ENCODE measurements at regions of chr11 and their contacts with region 1.

Region 1: DNA sequence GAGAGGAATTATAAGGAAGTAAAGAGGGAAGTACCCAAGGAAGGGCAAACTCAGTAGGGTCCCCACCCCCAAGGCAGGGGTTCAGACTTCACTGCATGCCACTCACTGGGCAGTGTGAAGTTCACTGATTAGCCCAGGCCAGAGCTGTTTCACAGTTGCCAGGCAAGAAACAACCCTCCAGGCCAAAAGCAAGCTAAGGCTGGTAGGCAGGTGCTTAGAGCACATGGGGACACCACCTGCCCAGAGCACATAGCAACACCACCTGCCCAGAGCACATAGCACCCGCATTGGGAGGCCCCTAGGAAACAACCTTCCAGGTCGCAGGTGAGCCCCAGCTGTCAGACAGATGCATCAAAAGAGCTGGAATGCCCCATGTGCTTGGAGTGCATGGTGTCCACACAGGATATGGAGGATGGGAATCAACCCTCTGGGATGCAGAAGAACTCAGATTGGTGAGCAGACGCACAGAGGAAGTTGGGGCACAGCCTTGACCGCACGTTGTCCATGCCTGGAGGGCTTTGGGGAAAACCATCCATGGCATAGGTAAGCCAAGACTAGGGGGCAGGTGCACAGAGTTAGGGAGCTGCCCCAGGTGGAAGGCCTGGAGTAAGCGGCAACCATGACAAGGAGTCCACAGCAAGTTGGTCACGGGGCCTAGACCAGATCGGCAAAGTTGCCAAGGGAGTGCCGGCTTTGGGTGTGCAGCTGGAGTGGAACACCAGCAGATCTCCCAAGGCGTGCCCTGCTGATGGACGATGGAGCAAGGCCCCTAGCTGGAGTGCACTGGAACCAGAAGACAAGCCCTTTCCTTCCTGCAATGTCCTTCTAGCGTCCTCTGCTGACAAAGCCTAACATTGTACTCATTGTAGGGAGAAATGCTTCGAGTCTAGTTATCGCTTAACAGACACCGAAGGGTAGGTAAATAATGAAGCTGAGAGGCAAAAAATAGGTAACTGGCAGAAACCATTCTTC is 7.8 kb upstream of the TMEM216 start:
- DNase-seq: peak; percentile 61
- H3K4me3 Mint-ChIP-seq: no peak overlapping the region
- H3K27ac Mint-ChIP-seq: no peak overlapping the region
- H3K4me1 Mint-ChIP-seq: peaks cover 11% of the 10 kb centered on the region
- H3K27me3 Mint-ChIP-seq: no peaks in the 10 kb centered on the region
- CTCF ChIP-seq: peak; percentile 25

Region 2: DNA sequence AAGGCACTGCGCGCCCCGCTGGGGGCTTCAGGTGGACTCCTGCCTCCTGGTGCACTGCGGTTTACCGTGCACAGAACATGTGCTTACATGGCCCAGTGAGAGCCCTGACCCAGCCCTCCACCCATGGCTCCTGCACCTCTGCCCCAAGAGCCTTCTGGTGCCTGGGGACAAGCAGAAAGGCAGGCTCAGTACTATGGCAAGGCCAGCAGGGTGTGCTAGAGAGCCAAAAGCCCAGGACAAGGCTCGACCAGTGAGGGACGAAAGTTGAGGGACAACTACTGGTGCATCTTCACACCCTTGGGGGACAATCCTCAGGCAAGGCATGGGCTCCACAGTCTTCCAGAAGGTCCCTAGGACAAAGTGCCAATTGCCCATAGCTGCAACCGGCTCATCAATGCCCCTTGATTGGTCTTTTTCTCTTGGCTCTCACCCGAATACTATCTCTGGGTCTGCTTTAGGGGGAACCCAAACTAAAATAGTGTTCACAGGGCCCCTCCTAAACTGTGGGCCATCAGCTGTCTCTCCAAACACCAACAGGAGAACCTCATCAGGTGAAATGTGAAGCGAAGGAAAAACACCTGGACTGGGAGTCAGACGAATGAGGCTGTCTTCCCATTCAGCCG is 130.0 kb before region 1 on chr11:
- CTCF ChIA-PET with region 1: interaction called, 55 read pairs
- POLR2A ChIA-PET with region 1: no interaction called
- intact Hi-C with region 1: loop called (anchors 1 kb)
- DNase-seq: peak; percentile 71
- H3K4me3 Mint-ChIP-seq: no peak overlapping the region
- H3K27ac Mint-ChIP-seq: no peak overlapping the region
- H3K4me1 Mint-ChIP-seq: no peaks in the 10 kb centered on the region
- H3K27me3 Mint-ChIP-seq: peaks cover 34% of the 10 kb centered on the region
- CTCF ChIP-seq: peak; percentile 89

Region 3: DNA sequence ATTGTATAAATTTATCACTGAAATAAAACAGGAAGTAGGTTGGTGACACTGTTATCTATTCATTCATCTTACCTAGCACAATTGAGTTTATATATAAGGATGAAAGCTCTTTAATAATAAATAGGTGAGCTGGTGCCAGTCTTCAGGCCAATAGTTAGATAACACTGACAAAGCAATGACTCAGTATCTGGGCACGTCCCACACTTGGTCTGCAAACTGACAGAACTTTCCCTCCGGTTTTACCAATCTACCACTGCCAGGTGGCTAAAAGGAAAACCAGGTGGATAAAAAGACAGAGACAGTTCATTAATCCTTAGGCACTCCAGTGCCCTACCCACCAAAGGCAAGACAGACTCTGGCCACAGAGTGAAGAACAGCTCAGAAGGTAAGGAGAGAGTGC is 69.3 kb before region 1 on chr11:
- CTCF ChIA-PET with region 1: interaction called, 21 read pairs
- POLR2A ChIA-PET with region 1: interaction called, 3 read pairs
- intact Hi-C with region 1: no loop called
- DNase-seq: no peak
- H3K4me3 Mint-ChIP-seq: no peak overlapping the region
- H3K27ac Mint-ChIP-seq: no peak overlapping the region
- H3K4me1 Mint-ChIP-seq: peaks cover 4% of the 10 kb centered on the region
- H3K27me3 Mint-ChIP-seq: no peaks in the 10 kb centered on the region
- CTCF ChIP-seq: no peak

Region 4: DNA sequence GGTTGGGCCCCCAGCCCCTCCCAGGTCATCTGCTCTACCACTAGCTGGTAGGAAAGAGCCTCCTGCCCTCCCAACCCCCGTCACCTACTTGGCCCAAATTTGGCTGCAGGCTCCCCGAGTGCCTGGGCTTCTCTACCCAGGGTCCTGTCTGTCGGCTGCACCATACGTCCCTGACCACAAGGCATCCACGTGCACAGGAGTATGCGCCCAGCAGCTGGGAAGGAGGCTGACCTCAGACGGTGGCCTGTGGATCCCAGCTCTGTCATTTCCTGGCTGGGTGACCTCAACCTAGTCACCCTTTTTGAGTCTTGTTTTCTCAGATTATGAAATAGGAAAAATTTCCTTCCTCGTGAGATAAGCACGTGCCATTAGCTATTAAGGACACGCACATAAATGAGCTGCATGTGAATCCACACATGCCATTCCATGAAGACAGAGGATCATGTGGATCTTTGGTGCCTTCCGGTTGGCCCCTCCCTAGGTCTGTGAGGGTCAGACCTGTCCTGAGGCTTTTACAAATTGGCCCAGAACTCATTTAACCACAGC is 36.6 kb before region 1 on chr11:
- CTCF ChIA-PET with region 1: interaction called, 294 read pairs
- POLR2A ChIA-PET with region 1: interaction called, 5 read pairs
- intact Hi-C with region 1: no loop called
- DNase-seq: no peak
- H3K4me3 Mint-ChIP-seq: no peak overlapping the region
- H3K27ac Mint-ChIP-seq: no peak overlapping the region
- H3K4me1 Mint-ChIP-seq: no peaks in the 10 kb centered on the region
- H3K27me3 Mint-ChIP-seq: no peaks in the 10 kb centered on the region
- CTCF ChIP-seq: no peak

Region 5: GRCh38 chr11:61429691-61430582 is 45.4 kb after region 1 on chr11 and contains the starts of genes CPSF7 and SDHAF2:
- CTCF ChIA-PET with region 1: interaction called, 12 read pairs
- POLR2A ChIA-PET with region 1: interaction called, 10 read pairs
- intact Hi-C with region 1: no loop called
- DNase-seq: peak; percentile 93
- H3K4me3 Mint-ChIP-seq: peak within 1 kb of the TSS; percentile 98
- H3K27ac Mint-ChIP-seq: peak within 1 kb of the TSS; percentile 99
- H3K4me1 Mint-ChIP-seq: no peaks in the 10 kb centered on the region
- H3K27me3 Mint-ChIP-seq: no peaks in the 10 kb centered on the region
- CTCF ChIP-seq: no peak
- total RNA-seq, gene CPSF7: 99.9 and 111 TPM in 2 replicates
- total RNA-seq, gene SDHAF2: 30.1 and 34.6 TPM in 2 replicates